Activated T-helper 2 cell treated with anti-CD3 and anti-CD28 coated beads, Interferon-gamma antibody, Interleukin-2, Interleukin-4, amounts not matched to agents 10 μg/mL and 5 μg/mL and 100 μg/mL, durations not matched to agents 14 hours and 24 hours and 36 hours (primary cell): ENCODE measurements at regions of chr9 and their contacts with region 1.

Region 1: GRCh38 chr9:137200311-137201204 is at the start of gene TPRN:
- DNase-seq: peak; percentile 99
- H3K4me3 Mint-ChIP-seq: peak within 1 kb of the TSS; percentile 83
- H3K27ac Mint-ChIP-seq: peak within 1 kb of the TSS; percentile 69
- H3K4me1 Mint-ChIP-seq: peaks cover 20% of the 10 kb centered on the region
- H3K27me3 Mint-ChIP-seq: no peaks in the 10 kb centered on the region
- total RNA-seq, gene TPRN: 16.4 and 18.2 TPM in 2 replicates

Region 2: DNA sequence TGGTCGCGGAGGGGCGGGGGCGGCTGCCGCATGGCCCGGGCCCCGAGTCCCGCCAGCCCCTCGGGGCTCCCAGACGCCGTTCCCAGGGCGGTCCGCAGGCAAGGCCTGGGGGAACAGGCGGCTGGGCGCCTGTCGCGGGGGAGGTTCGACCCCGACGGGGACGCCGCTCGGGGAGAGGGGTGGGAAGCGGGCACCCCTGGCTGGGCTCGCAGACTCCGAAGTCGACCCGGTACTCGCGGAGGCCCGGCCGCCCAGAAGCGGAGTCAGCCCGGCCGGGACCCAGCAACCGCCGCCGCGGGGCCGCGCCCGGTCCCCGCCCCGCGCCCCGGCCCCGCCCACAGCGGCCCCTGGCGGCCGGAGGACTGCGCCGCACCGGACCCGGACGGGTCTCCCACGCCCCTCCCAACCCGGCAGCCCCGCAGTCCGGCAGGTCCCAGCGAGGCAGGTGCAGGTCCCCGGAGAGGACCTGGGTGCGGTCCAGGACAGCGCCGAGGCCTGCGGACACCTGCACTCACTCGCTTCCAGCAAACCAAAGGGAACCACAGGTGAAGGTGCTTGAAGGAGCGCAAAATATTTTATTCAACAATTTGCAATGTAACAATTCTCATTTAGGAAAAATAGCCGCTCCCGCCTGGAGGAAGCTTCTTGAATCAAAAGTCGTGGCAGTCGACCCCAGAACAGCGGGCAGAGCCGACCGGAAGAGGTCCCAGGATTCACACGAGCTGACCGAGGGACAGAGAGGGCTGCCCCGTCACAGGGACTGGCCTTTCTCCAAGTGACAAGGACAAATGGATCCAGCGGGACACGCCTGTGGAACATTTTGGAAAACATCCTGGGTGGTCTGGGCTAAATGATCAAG is 760.8 kb before region 1 on chr9 and contains the start of gene INPP5E:
- intact Hi-C with region 1: no loop called
- DNase-seq: peak; percentile 84
- H3K4me3 Mint-ChIP-seq: peak within 1 kb of the TSS; percentile 83
- H3K27ac Mint-ChIP-seq: no peak within 1 kb of the TSS
- H3K4me1 Mint-ChIP-seq: peaks cover 19% of the 10 kb centered on the region
- H3K27me3 Mint-ChIP-seq: no peaks in the 10 kb centered on the region
- total RNA-seq, gene INPP5E: 20.8 and 21.8 TPM in 2 replicates

Region 3: DNA sequence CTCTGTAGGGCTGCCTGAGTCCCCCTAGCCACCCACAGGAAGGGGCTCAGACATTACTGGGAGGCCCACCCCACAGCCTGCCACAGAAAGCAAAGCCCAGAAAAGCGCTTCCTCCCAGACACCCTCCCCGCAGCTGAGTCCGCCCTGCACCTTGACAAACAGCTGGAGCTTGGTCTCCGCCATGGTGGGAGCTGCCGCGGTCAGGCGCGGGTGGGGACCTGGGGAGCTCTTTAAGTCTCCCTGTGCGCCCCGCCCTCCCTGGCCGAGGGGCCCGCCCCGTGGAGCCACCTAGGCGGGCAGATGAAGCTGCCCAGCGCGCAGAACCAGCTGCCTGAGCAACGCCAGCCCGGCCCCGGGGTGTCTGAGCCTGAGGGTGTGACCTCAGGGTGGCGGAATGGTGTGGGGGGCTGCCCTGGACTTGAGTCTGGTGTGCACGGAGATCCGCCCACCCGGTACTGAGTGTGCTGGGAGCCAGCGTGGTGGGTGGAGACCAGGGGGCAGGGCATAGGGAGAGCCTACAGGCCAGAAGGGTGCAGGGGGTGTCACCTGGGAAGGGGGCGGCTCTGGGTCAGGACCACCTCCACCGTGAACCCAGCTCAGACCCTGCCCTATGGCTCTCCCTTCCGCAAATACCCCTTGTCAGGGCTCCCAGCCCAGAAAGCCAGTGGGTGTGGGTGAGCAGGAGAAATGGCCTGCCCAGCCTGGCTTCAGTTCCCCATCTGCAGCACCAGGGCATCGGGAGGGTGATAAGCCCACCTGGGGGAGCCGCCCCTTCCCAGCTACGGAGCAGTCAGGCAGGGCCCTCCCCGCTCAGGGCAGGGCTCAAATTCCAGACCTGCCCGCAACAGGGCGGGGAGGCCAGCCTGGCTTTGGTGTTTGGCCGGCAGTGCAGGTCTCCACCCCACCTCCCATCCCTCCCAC is 203.9 kb before region 1 on chr9 and contains the start of gene CLIC3:
- intact Hi-C with region 1: no loop called
- DNase-seq: no peak
- H3K4me3 Mint-ChIP-seq: no peak within 1 kb of the TSS
- H3K27ac Mint-ChIP-seq: no peak within 1 kb of the TSS
- H3K4me1 Mint-ChIP-seq: peaks cover 30% of the 10 kb centered on the region
- H3K27me3 Mint-ChIP-seq: no peaks in the 10 kb centered on the region
- total RNA-seq, gene CLIC3: not detected in 2 replicates

Region 4: DNA sequence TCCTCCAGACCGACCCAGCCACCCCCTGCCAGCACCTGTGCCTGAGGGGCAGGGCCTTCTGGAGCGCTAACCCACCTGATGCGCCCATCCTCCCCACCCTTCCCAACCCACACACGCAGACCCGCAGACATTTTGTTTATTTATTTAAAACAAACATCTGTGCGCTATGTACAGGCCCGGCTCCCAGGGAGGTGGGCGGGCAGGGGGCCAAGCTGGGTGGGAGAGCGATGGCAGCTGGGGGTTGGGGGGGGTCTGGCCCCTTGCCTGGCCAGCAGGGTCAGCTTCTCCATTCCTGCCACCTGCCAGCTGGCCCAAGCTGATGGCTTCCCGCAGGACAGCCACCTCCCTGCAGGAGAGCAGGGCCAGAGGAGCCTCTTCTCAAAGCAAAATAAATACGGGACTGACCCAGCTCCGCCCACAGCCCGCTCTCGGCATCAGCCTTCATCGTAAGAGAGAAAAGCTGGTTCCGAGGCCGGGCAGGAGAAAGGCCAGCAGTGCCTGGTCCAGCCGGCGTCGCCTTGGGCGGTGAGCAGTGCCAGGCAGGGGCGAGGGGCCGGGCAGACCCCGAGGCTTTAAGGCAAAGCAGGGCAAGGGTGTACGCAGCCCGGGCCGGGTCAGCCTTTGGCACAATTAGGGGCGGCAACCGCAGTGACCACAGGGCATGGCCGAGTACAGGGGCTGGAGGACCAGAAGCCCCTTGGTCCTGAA is 193.3 kb before region 1 on chr9:
- intact Hi-C with region 1: no loop called
- DNase-seq: no peak
- H3K4me3 Mint-ChIP-seq: no peak overlapping the region
- H3K27ac Mint-ChIP-seq: no peak overlapping the region
- H3K4me1 Mint-ChIP-seq: no peaks in the 10 kb centered on the region
- H3K27me3 Mint-ChIP-seq: no peaks in the 10 kb centered on the region

Region 5: DNA sequence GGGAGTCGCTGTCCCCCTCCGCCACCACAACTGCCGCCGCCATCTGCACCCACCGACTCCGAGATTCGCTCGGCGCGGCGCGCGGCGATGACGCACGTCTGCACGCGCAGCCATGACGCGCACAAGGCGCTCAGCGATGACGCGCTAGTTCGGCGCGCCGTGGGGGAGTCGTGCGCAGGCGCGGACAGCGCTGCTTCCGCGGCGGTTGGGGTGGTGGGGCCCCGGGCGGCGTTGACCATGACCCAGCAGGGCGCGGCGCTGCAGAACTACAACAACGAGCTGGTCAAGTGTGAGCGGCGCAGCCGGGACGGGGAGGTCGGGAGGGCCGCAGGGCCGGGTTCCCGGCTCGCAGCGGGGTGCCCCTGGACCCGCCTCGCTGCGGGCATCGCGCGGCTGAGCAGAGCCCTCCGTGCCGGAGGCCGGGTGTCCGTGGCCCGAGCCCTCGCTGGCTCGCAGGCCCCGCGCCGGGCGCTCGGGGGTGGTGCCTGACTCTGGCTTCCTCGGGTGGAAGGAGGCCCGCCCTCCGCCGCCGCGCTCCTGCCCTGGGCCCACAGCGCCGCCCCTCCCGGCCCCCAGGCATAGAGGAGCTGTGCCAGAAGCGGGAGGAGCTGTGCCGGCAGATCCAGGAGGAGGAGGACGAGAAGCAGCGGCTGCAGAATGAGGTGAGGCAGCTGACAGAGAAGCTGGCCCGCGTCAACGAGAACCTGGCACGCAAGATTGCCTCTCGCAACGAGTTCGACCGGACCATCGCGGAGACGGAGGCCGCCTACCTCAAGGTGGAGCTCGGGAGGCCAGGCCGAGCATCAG is 11.9 kb before region 1 on chr9 and contains the starts of genes ANAPC2 and SSNA1:
- intact Hi-C with region 1: loop called (anchors 1 kb)
- DNase-seq: peak; percentile 93
- H3K4me3 Mint-ChIP-seq: peak within 1 kb of the TSS; percentile 94
- H3K27ac Mint-ChIP-seq: peak within 1 kb of the TSS; percentile 89
- H3K4me1 Mint-ChIP-seq: peaks cover 25% of the 10 kb centered on the region
- H3K27me3 Mint-ChIP-seq: no peaks in the 10 kb centered on the region
- total RNA-seq, gene ANAPC2: 52.3 and 58.5 TPM in 2 replicates
- total RNA-seq, gene SSNA1: 91.6 and 91.8 TPM in 2 replicates

Region 6: GRCh38 chr9:137354845-137355760 is 154.5 kb after region 1 on chr9:
- intact Hi-C with region 1: no loop called
- DNase-seq: no peak
- H3K4me3 Mint-ChIP-seq: no peak overlapping the region
- H3K27ac Mint-ChIP-seq: no peak overlapping the region
- H3K4me1 Mint-ChIP-seq: no peaks in the 10 kb centered on the region
- H3K27me3 Mint-ChIP-seq: no peaks in the 10 kb centered on the region